HepG2 (cell line): ENCODE measurements at regions of chr13 and their contacts with region 1.

Region 1: DNA sequence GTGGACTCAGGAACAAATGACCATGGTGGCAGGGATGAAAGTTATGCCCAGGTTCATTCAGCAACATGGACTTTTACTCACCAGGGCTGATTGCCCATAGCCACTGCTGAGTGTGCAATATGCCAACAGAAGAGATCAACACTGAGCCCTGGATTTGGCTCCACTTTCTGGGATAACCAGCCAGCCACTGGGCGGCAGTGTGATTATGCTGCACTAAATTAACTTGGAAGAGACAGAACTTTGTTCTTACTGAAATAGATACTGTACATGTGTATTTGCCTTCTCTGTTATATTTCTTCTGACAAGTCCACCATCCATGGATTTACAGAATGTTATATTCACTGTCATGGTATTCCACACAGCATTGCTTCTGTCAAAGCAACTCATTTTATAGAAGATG is 257.4 kb downstream of the TDRD3 start:
- DNase-seq: peak; percentile 16
- ATAC-seq: peak; percentile 93
- H3K4me3 ChIP-seq: no peak overlapping the region
- H3K27ac ChIP-seq: no peak overlapping the region
- H3K4me1 ChIP-seq: no peaks in the 10 kb centered on the region
- H3K27me3 ChIP-seq: no peaks in the 10 kb centered on the region
- CTCF ChIP-seq: peak; percentile 69
- EP300 ChIP-seq: no peak
- POLR2A ChIP-seq: no peak
- RAD21 ChIP-seq: no peak

Region 2: DNA sequence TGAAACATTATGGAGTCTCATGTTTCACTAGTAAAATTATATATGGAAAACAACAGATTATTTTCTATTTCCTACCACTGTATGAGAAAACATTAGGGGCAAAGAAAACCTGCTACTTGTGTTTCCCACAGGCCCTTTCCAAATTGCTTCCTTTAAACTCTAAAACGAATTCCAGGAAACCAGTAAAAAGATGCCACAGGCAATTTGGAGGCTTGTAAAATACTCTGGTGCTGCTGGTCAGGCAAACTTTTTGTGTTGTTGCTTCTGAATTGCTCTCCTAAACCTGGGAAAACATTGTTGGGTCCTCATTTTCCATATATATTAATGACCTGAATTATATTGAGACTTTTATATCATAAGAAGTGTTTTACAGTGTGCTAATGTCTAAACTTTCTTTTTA is 115.8 kb before region 1 on chr13:
- CTCF ChIA-PET with region 1: no interaction called
- POLR2A ChIA-PET with region 1: no interaction called
- in situ Hi-C with region 1: no loop called
- intact Hi-C with region 1: no loop called
- DNase-seq: no peak
- ATAC-seq: no peak
- H3K4me3 ChIP-seq: no peak overlapping the region
- H3K27ac ChIP-seq: no peak overlapping the region
- H3K4me1 ChIP-seq: no peaks in the 10 kb centered on the region
- H3K27me3 ChIP-seq: no peaks in the 10 kb centered on the region
- CTCF ChIP-seq: no peak
- EP300 ChIP-seq: no peak
- POLR2A ChIP-seq: no peak
- RAD21 ChIP-seq: no peak

Region 3: GRCh38 chr13:60562081-60562780 is 92.2 kb before region 1 on chr13:
- CTCF ChIA-PET with region 1: no interaction called
- POLR2A ChIA-PET with region 1: no interaction called
- in situ Hi-C with region 1: no loop called
- intact Hi-C with region 1: no loop called
- DNase-seq: no peak
- ATAC-seq: no peak
- H3K4me3 ChIP-seq: no peak overlapping the region
- H3K27ac ChIP-seq: no peak overlapping the region
- H3K4me1 ChIP-seq: no peaks in the 10 kb centered on the region
- H3K27me3 ChIP-seq: no peaks in the 10 kb centered on the region
- CTCF ChIP-seq: no peak
- EP300 ChIP-seq: no peak
- POLR2A ChIP-seq: no peak
- RAD21 ChIP-seq: no peak

Region 4: DNA sequence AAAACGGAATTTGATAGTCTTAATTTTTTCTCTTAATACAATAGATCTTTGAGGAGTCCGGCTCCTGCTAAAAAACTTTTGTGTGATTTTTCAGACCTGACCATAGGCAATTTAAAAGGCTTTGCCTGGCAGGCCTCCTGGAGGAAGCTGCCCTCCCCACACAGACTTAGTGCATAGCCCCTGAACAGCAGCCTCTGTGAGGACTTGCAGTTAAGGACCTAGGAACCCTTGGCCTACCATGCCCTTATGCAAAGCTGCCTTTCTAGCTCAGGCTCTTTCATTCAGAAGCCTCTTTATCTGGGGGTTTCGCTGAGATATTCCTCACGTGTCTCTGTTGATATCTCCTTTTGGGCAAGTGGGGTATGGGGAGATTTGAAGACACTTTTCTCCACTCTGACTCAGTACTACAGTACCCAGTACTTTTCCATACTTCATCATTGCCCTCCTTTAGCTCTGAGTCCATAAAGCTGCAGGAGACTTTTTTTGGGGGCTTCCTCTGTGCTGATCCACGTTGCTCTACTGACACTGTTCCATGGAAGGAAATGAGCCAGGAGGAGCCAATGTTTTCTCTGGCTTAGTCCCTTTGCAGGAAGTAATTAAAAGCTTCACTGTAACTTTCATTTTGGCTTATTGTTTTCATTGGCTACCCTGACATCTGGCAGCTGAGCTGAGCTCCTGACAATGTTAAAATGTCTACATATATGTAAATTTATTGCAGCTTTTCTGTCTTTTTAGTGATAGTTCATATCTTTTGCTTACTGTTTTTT is 25.7 kb after region 1 on chr13:
- CTCF ChIA-PET with region 1: no interaction called
- POLR2A ChIA-PET with region 1: no interaction called
- in situ Hi-C with region 1: no loop called
- intact Hi-C with region 1: no loop called
- DNase-seq: no peak
- ATAC-seq: no peak
- H3K4me3 ChIP-seq: no peak overlapping the region
- H3K27ac ChIP-seq: no peak overlapping the region
- H3K4me1 ChIP-seq: no peaks in the 10 kb centered on the region
- H3K27me3 ChIP-seq: no peaks in the 10 kb centered on the region
- CTCF ChIP-seq: no peak
- EP300 ChIP-seq: no peak
- POLR2A ChIP-seq: no peak
- RAD21 ChIP-seq: no peak

Region 5: GRCh38 chr13:60990032-60990733 is 335.8 kb after region 1 on chr13:
- CTCF ChIA-PET with region 1: no interaction called
- POLR2A ChIA-PET with region 1: no interaction called
- in situ Hi-C with region 1: no loop called
- intact Hi-C with region 1: loop called (anchors 10 kb)
- DNase-seq: peak; percentile 12
- ATAC-seq: no peak; the same call in 2 of the 3 replicates
- H3K4me3 ChIP-seq: no peak overlapping the region
- H3K27ac ChIP-seq: no peak overlapping the region
- H3K4me1 ChIP-seq: no peaks in the 10 kb centered on the region
- H3K27me3 ChIP-seq: no peaks in the 10 kb centered on the region
- CTCF ChIP-seq: no peak
- EP300 ChIP-seq: no peak
- POLR2A ChIP-seq: no peak
- RAD21 ChIP-seq: no peak

Region 6: DNA sequence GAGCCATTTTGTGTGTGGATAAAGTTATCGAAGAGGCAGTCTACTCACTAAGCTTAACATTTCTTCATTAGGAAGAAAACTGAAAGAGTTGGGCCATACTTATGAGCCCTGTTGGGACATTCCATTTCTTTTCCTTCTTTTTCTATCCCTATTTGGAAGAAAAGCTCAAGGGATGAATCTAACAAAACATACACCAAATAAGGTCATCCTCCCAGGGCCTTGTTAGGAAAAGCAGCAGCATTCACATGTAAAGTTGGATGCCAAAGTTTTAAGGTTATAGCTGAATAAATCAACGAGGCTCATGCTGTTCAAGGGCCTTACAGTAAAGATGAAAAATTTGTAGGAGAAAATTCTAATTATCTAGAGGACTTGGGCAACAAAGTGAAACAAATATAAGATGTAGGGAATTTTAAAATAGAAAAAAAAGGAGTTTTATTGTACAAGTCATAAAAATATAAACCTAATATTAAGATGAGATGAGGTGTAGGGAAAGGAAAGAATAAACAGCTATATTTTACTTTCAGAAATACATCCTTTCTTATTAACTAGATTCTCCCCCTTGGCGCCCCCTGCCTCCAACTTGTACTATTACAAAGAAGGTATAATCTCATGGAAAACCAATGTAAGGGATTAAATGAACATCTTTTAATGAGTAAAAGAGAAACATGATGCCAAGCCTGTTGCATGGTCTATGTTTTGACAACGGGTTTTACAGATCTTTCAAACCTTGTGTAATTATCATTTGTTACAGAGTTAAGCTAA is 600.8 kb after region 1 on chr13:
- CTCF ChIA-PET with region 1: no interaction called
- POLR2A ChIA-PET with region 1: no interaction called
- in situ Hi-C with region 1: no loop called
- intact Hi-C with region 1: loop called (anchors 10 kb)
- DNase-seq: peak; percentile 3
- ATAC-seq: no peak
- H3K4me3 ChIP-seq: no peak overlapping the region
- H3K27ac ChIP-seq: no peak overlapping the region
- H3K4me1 ChIP-seq: no peaks in the 10 kb centered on the region
- H3K27me3 ChIP-seq: no peaks in the 10 kb centered on the region; a peak in 1 of 5 replicates
- CTCF ChIP-seq: 0 out of 2 replicates have a peak, but pooled peaks have one; percentile 10
- EP300 ChIP-seq: no peak
- POLR2A ChIP-seq: no peak
- RAD21 ChIP-seq: no peak